Activated CD4-positive, alpha-beta memory T cell treated with anti-CD3 and anti-CD28 coated beads, Interleukin-2, amount 10 ng/mL, durations not matched to agents 7 days and 5 days (primary cell): ENCODE measurements at regions of chr6 and their contacts with region 1.

Region 1: GRCh38 chr6:41920921-41921711 is at the starts of genes BYSL and MED20:
- DNase-seq: peak; percentile 95
- H3K4me3 Mint-ChIP-seq: peak within 1 kb of the TSS; percentile 95
- H3K27ac Mint-ChIP-seq: peak within 1 kb of the TSS; percentile 97
- H3K4me1 Mint-ChIP-seq: peaks cover 59% of the 10 kb centered on the region
- H3K27me3 Mint-ChIP-seq: no peaks in the 10 kb centered on the region
- total RNA-seq, gene BYSL: 23.9 to 24.8 TPM
- total RNA-seq, gene MED20: 21.4 to 21.9 TPM

Region 2: DNA sequence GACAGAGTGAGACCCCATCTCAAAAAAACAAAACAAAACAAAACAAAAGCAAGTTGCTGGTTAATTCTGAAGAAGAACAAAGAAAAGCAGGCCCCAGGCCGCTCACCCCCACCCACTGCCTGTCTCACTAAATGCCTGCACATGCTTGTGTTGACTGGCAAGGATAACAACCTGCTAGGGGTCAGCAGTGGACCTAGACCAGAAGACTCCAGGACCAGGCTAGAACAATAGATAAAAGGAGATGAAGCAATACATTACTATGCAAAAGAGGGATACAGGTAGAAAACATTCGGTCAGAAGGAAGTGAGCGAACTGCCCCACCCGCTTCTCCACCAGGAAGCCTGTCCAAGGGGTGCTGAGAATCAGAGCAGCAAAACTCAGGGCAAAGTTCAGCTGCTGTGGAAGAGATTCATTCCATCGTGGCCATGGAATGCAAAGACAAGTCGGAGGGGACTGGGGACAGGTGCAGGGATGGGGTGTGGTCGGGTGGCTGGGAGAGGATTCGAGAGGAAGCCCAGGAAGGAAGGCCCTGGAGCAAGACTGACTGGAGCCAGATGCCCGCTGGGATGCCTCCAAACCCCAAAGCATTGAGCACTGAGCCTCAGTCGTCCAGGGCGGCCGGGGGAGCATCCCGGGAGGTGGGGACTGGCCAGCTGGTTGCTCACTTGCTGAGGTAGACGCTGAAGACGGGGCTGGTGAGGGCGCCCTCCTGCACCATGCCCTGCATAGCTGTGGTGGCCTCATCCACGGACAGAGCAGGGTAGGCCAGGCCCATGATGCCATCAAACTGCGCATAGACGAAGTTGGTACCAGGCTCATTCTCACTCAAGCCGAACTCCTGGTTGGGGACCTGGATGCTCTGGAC is 179.3 kb before region 1 on chr6:
- CTCF ChIA-PET with region 1: no interaction called
- POLR2A ChIA-PET with region 1: no interaction called
- DNase-seq: no peak
- H3K4me3 Mint-ChIP-seq: no peak overlapping the region
- H3K27ac Mint-ChIP-seq: no peak overlapping the region
- H3K4me1 Mint-ChIP-seq: no peaks in the 10 kb centered on the region
- H3K27me3 Mint-ChIP-seq: peaks cover under 1% of the 10 kb centered on the region

Region 3: GRCh38 chr6:41878246-41878645 is 42.9 kb before region 1 on chr6:
- CTCF ChIA-PET with region 1: no interaction called
- POLR2A ChIA-PET with region 1: no interaction called
- DNase-seq: no peak
- H3K4me3 Mint-ChIP-seq: no peak overlapping the region
- H3K27ac Mint-ChIP-seq: no peak overlapping the region
- H3K4me1 Mint-ChIP-seq: no peaks in the 10 kb centered on the region
- H3K27me3 Mint-ChIP-seq: no peaks in the 10 kb centered on the region

Region 4: GRCh38 chr6:41895300-41896233 is 25.5 kb before region 1 on chr6 and contains the start of gene USP49:
- CTCF ChIA-PET with region 1: interaction called, 10 read pairs
- POLR2A ChIA-PET with region 1: interaction called, 26 read pairs
- DNase-seq: peak; percentile 91
- H3K4me3 Mint-ChIP-seq: no peak within 1 kb of the TSS
- H3K27ac Mint-ChIP-seq: peak within 1 kb of the TSS; percentile 66
- H3K4me1 Mint-ChIP-seq: peaks cover 15% of the 10 kb centered on the region
- H3K27me3 Mint-ChIP-seq: no peaks in the 10 kb centered on the region
- total RNA-seq, gene USP49: 6.8 to 7.3 TPM

Region 5: GRCh38 chr6:41901882-41902519 is 19.1 kb before region 1 on chr6:
- CTCF ChIA-PET with region 1: interaction called, 16 read pairs
- POLR2A ChIA-PET with region 1: interaction called, 9 read pairs
- DNase-seq: peak; percentile 72
- H3K4me3 Mint-ChIP-seq: no peak overlapping the region
- H3K27ac Mint-ChIP-seq: no peak overlapping the region
- H3K4me1 Mint-ChIP-seq: peaks cover 17% of the 10 kb centered on the region
- H3K27me3 Mint-ChIP-seq: no peaks in the 10 kb centered on the region

Region 6: GRCh38 chr6:41909727-41910126 is 11.4 kb before region 1 on chr6:
- CTCF ChIA-PET with region 1: interaction called, 16 read pairs
- POLR2A ChIA-PET with region 1: interaction called, 9 read pairs
- DNase-seq: no peak
- H3K4me3 Mint-ChIP-seq: no peak overlapping the region
- H3K27ac Mint-ChIP-seq: no peak overlapping the region
- H3K4me1 Mint-ChIP-seq: peaks cover 22% of the 10 kb centered on the region
- H3K27me3 Mint-ChIP-seq: no peaks in the 10 kb centered on the region

Region 7: DNA sequence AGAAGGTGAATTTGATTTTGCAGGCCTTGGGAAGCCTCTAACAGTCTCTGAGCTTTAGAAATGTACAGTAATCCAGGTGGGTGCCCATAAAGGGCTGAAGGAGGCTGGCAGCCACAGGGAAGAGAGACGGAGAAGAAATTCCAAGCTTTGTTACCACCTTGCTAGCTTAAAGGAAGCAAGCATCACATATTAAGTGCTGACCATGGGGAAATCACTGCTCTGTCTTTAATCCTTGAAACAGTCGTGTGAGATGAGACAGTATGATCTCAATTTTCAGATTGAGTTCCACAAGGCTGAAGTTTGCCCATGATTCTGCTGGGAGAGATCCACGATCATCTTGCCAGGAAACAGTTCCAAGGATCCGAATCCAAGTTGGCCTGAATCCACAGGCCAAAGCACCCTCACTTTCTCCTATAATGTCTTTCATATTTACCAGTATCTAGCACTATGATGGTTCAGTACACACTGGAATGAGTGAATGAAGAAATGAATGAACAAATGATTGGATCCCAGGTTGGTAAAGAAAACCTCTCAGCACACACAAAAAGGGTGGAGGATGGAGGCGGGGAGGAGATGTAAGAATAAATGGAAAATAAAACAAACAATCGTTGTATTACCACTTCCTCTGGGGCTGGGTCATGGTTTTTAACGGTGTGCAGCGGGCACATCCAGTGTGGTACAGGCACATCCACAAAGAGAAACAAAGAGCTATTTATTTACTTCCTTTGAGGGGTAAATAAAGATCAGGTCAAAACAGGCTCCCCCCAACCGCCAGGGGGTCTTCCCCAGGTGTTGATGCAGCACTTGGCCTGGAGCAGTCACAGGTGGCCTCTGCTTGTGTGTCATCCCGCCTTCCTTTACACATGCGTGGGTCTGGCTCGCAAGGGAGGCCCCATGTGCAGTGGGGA is 101.0 kb after region 1 on chr6:
- CTCF ChIA-PET with region 1: interaction called, 17 read pairs
- POLR2A ChIA-PET with region 1: interaction called, 9 read pairs
- DNase-seq: peak; percentile 80
- H3K4me3 Mint-ChIP-seq: peak overlapping the region; percentile 65
- H3K27ac Mint-ChIP-seq: peak overlapping the region; percentile 95
- H3K4me1 Mint-ChIP-seq: peaks cover 74% of the 10 kb centered on the region
- H3K27me3 Mint-ChIP-seq: no peaks in the 10 kb centered on the region

Region 8: DNA sequence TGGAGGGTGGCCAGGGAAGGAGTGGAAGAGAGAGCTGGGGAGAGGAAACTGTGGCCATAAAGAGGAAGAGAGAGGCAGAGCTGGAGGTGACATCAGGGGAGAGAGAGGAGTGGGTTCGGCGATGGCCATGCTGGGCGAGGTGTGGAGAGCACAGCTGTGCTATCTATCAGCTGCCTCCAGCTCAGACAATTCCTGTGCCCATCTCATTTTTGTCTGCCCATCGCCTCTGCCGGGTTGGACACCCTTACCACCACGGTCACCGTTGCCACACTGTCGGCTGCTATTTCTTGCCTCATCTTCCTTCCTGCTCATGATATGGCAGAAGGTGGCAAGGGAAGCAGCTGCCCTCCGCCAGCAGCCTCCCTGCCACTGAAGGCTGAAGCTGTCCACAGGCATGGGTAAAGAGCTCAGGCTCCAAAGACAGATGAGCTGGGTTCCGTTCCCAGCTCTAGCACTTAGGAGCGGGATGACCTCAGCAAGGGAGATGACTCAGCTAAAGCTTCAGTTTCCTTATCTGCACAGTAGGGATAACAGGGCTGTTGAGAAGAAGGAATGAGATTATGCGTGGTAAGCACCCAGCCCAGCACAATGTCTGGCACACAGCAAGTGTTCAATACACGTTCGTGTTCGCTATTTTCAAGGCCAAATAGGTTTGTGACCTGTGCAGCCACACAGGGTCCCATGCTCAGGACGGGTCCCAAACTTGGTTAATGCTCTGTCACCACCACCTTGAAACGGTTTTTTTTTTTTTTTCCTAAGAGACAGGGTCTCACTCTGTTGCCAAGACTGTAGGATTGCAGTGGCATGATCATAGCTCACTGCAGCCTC is 107.3 kb after region 1 on chr6:
- CTCF ChIA-PET with region 1: interaction called, 17 read pairs
- POLR2A ChIA-PET with region 1: interaction called, 5 read pairs
- DNase-seq: no peak
- H3K4me3 Mint-ChIP-seq: peak overlapping the region; percentile 20
- H3K27ac Mint-ChIP-seq: peak overlapping the region; percentile 87
- H3K4me1 Mint-ChIP-seq: peaks cover 81% of the 10 kb centered on the region
- H3K27me3 Mint-ChIP-seq: no peaks in the 10 kb centered on the region

Region 9: GRCh38 chr6:42050266-42051032 is 129.3 kb after region 1 on chr6 and contains the start of gene TAF8:
- CTCF ChIA-PET with region 1: interaction called, 199 read pairs
- POLR2A ChIA-PET with region 1: interaction called, 71 read pairs
- DNase-seq: peak; percentile 91
- H3K4me3 Mint-ChIP-seq: peak within 1 kb of the TSS; percentile 82
- H3K27ac Mint-ChIP-seq: peak within 1 kb of the TSS; percentile 94
- H3K4me1 Mint-ChIP-seq: peaks cover 75% of the 10 kb centered on the region
- H3K27me3 Mint-ChIP-seq: no peaks in the 10 kb centered on the region
- total RNA-seq, gene TAF8: 48.0 to 55.1 TPM